ENCODE measurements at regions of chr19 and their contacts with region 1.

Region 1: GRCh38 chr19:11288343-11288742 is 7.6 kb upstream of the TSPAN16 start:
- DNase-seq: peak in 2 of 7 donors; percentile 28 to 59
- H3K4me3 ChIP-seq: no peak overlapping the region
- H3K27ac ChIP-seq: no peak overlapping the region
- H3K4me1 ChIP-seq: peaks cover 0 to 2% of the 10 kb centered on the region in 2 donors
- H3K27me3 ChIP-seq: no peaks in the 10 kb centered on the region
- CTCF ChIP-seq: peak; percentile 22 to 50 (median 42)
- POLR2A ChIP-seq: no peak

Region 2: GRCh38 chr19:11243798-11244169 is 44.6 kb before region 1 on chr19:
- intact Hi-C with region 1: loop called in 1 of 2 experiments (anchors 2 kb)
- DNase-seq: no peak
- H3K4me3 ChIP-seq: no peak overlapping the region
- H3K27ac ChIP-seq: peak overlapping the region in 3 of 5 donors; percentile 33 to 72 (median 68)
- H3K4me1 ChIP-seq: peaks cover 3 to 5% of the 10 kb centered on the region in 2 donors
- H3K27me3 ChIP-seq: no peaks in the 10 kb centered on the region
- CTCF ChIP-seq: no peak
- POLR2A ChIP-seq: no peak

Region 3: DNA sequence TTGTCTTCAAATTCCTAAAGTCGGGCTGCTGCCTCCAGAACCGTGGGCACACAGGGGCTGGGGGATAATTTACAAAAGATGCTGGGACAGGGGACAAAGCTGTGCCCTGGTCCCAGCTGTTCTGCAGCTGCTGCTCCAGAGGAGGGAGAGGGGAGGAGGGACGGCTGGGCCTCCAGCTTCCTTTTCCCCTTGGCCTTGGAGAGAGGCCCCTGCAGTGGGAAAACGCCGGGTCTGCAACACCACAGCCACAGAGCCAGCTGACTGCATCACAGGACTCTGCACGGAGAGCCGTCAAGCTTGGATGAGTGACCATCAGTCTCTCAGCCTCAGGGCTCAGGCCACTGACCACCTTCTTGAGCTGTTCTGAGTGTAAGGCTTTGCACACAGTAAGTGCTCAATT is 32.2 kb before region 1 on chr19:
- intact Hi-C with region 1: no loop called
- DNase-seq: no peak
- H3K4me3 ChIP-seq: no peak overlapping the region
- H3K27ac ChIP-seq: peak overlapping the region in 1 of 5 donors; percentile 44
- H3K4me1 ChIP-seq: no peaks in the 10 kb centered on the region
- H3K27me3 ChIP-seq: no peaks in the 10 kb centered on the region
- CTCF ChIP-seq: no peak
- POLR2A ChIP-seq: no peak

Measured in adrenal gland (tissue), 19 donors.